ENCODE measurements at regions of chr6 and their contacts with region 1.

Region 1: GRCh38 chr6:132962936-132963868 is 148.8 kb downstream of the RPS12 start:
- DNase-seq: peak; percentile 90
- H3K4me3 Mint-ChIP-seq: no peak overlapping the region
- H3K27ac Mint-ChIP-seq: no peak overlapping the region
- H3K4me1 Mint-ChIP-seq: peaks cover 20% of the 10 kb centered on the region
- H3K27me3 Mint-ChIP-seq: peaks cover 25% of the 10 kb centered on the region

Region 2: GRCh38 chr6:132023490-132023889 is 939.7 kb before region 1 on chr6:
- intact Hi-C with region 1: no loop called
- DNase-seq: no peak
- H3K4me3 Mint-ChIP-seq: no peak overlapping the region
- H3K27ac Mint-ChIP-seq: no peak overlapping the region
- H3K4me1 Mint-ChIP-seq: no peaks in the 10 kb centered on the region
- H3K27me3 Mint-ChIP-seq: no peaks in the 10 kb centered on the region

Region 3: DNA sequence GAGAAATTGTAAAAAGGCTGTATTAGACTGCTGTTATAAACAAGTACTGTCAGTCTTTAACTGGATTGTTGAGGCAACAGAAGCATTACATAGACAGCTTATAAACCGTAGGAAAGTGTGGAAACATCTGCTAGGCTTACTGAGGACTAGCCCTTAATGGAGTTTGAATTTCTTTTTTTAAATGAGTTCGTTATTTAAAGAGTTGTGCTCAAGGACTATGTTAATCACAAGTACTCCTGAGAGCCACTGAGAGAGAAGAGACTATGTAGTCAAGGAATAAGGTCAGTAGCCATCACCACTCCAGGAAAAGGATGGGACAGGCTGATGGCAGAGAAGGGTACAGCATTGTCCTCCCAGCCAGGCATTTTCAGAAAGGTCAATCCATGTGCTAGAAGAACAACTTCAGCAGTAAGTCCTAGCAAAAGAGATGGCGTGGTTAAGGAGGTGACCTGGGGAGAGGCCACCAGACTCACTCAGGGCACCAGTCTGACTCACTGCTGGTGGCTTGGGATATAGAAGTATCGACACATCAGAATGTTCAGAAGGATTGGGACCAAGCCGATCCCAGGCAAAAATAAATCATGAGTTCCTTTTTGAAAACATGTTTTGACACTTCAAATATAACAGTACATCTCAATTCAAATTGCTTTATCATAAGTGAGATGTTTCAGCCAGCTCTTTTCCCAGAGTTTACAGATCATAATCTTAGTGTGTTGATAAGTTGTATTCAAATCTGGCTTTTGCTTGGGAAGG is 142.4 kb before region 1 on chr6:
- intact Hi-C with region 1: loop called (anchors 10 kb)
- DNase-seq: peak; percentile 51
- H3K4me3 Mint-ChIP-seq: no peak overlapping the region
- H3K27ac Mint-ChIP-seq: peak overlapping the region; percentile 14
- H3K4me1 Mint-ChIP-seq: peaks cover 39% of the 10 kb centered on the region
- H3K27me3 Mint-ChIP-seq: no peaks in the 10 kb centered on the region

Region 4: GRCh38 chr6:133130863-133131262 is 167.7 kb after region 1 on chr6:
- intact Hi-C with region 1: no loop called
- DNase-seq: no peak
- H3K4me3 Mint-ChIP-seq: no peak overlapping the region
- H3K27ac Mint-ChIP-seq: no peak overlapping the region
- H3K4me1 Mint-ChIP-seq: no peaks in the 10 kb centered on the region
- H3K27me3 Mint-ChIP-seq: no peaks in the 10 kb centered on the region

Region 5: GRCh38 chr6:133512410-133513016 is 549.3 kb after region 1 on chr6:
- intact Hi-C with region 1: loop called (anchors 2 kb)
- DNase-seq: peak; percentile 70
- H3K4me3 Mint-ChIP-seq: no peak overlapping the region
- H3K27ac Mint-ChIP-seq: no peak overlapping the region
- H3K4me1 Mint-ChIP-seq: no peaks in the 10 kb centered on the region
- H3K27me3 Mint-ChIP-seq: peaks cover 2% of the 10 kb centered on the region